ENCODE measurements at regions of chr19 and their contacts with region 1.

Region 1: DNA sequence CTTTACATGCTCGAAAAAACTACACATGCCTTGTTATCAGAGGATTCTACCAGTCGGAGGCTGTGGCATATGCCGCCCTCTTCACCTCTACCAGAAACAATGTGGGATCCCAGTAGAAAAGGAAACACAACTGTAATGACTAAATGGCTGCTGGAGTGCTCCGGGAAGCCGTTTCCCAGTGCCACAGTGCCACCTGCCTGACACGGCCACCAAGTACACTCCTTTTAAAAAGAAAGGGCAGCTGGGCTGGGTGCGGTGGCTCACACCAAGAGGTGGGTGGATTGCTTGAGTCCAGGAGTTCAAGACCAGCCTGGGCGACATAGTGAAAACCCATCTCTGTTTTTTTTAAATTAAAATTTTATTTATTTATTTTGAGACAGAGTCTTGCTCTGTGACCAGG is 67.3 kb downstream of the TRPM4 start:
- DNase-seq: no peak
- H3K4me3 ChIP-seq: no peak overlapping the region
- CTCF ChIP-seq: peak; percentile 54

Region 2: GRCh38 chr19:48999481-49000325 is 225.2 kb before region 1 on chr19:
- CTCF ChIA-PET with region 1: interaction called, 20 read pairs
- POLR2A ChIA-PET with region 1: no interaction called
- DNase-seq: no peak
- H3K4me3 ChIP-seq: no peak overlapping the region
- CTCF ChIP-seq: peak; percentile 87

Region 3: GRCh38 chr19:49097455-49098288 is 127.2 kb before region 1 on chr19:
- CTCF ChIA-PET with region 1: interaction called, 37 read pairs
- POLR2A ChIA-PET with region 1: no interaction called
- DNase-seq: peak; percentile 17
- H3K4me3 ChIP-seq: no peak overlapping the region
- CTCF ChIP-seq: peak; percentile 95

Region 4: DNA sequence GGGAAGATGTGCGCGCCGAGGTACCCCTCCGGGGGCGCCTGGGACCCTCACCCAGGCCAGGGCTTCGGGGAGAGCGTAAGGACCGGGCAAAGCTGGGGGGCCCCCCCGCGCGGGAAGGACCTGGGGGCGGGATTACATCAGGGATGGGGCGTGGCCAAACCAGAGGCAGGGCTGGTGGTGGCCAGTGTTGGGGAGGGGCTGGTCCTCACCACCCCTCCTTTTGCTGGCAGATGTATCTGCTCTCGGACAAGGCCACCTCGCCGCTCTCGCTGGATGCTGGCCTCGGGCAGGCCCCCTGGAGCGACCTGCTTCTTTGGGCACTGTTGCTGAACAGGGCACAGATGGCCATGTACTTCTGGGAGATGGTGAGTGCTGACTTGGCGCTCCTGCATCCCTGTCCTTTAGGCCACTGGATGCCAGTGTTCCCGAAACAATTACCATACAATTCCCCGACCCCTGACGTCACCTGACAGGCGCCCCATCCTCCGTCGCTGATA is 42.0 kb before region 1 on chr19:
- CTCF ChIA-PET with region 1: no interaction called
- POLR2A ChIA-PET with region 1: no interaction called
- DNase-seq: no peak
- H3K4me3 ChIP-seq: no peak overlapping the region
- CTCF ChIP-seq: no peak

Region 5: DNA sequence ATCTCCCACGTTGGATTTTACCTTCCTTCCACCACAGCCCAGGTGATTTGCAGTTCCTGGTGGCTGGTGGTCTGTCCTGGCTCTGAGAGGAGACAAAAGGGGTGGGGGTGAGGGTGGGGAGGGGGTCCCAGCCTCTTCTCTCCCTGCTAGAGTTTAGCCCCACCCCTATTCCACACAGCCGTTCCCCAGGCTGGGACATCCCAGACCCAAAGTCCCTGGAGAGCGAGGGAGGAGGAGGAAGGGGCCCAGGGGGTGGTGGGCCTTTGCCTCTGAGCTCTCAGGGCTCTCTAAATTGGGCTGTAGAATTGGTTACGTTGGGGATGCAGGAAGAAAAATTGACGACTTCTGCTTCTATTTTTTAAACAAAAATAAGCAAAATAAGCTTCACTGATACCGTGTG is 18.3 kb after region 1 on chr19:
- CTCF ChIA-PET with region 1: interaction called, 41 read pairs
- POLR2A ChIA-PET with region 1: no interaction called
- DNase-seq: no peak
- H3K4me3 ChIP-seq: no peak overlapping the region
- CTCF ChIP-seq: no peak

Region 6: GRCh38 chr19:49301165-49301865 is 76.5 kb after region 1 on chr19:
- CTCF ChIA-PET with region 1: interaction called, 33 read pairs
- POLR2A ChIA-PET with region 1: no interaction called
- DNase-seq: no peak
- H3K4me3 ChIP-seq: no peak overlapping the region
- CTCF ChIP-seq: peak; percentile 87

Measured in AG04449 (cell line).